BJ (cell line): ENCODE measurements at regions of chr22 and their contacts with region 1.

Region 1: GRCh38 chr22:26308467-26308866 is 120.6 kb upstream of the ASPHD2 start:
- DNase-seq: no peak
- H3K4me3 ChIP-seq: no peak overlapping the region
- H3K27me3 ChIP-seq: peaks cover 11% of the 10 kb centered on the region
- CTCF ChIP-seq: no peak

Region 2: GRCh38 chr22:26318975-26319374 is 10.5 kb after region 1 on chr22:
- CTCF ChIA-PET with region 1: interaction called, 12 read pairs
- POLR2A ChIA-PET with region 1: no interaction called
- DNase-seq: no peak
- H3K4me3 ChIP-seq: no peak overlapping the region
- H3K27me3 ChIP-seq: peaks cover 6% of the 10 kb centered on the region
- CTCF ChIP-seq: peak; percentile 41

Region 3: DNA sequence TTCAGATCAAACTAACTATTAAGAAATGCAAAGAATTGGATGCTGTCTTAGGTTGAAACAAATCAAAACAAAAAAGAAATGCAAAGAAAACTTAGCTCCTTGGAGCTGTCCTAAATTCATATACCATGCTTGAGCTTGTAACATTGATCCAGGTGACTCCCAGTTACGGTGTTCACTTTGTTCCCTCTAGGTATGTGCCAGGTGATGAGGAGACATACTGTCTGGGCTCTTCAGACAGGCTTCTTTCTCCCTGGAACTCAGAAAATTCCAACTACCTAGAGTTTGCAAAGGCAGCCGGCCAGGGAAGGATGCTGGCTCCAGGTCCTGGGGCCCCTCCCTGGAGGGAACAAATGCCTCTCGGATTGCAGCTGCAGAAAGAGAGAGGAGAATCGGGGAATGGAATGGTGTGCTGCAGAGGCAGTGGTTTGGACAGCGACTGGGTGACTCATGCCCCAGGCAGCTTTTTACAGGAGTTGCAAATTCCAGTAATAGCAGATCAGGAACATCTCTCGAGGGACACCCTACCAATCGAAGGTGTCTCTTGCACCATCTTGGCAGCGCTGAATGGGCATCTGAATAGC is 108.3 kb after region 1 on chr22:
- CTCF ChIA-PET with region 1: no interaction called
- POLR2A ChIA-PET with region 1: no interaction called
- DNase-seq: peak; percentile 48
- H3K4me3 ChIP-seq: no peak overlapping the region
- H3K27me3 ChIP-seq: peaks cover 17% of the 10 kb centered on the region
- CTCF ChIP-seq: no peak